ENCODE measurements at regions of chr6 and their contacts with region 1.

Region 1: DNA sequence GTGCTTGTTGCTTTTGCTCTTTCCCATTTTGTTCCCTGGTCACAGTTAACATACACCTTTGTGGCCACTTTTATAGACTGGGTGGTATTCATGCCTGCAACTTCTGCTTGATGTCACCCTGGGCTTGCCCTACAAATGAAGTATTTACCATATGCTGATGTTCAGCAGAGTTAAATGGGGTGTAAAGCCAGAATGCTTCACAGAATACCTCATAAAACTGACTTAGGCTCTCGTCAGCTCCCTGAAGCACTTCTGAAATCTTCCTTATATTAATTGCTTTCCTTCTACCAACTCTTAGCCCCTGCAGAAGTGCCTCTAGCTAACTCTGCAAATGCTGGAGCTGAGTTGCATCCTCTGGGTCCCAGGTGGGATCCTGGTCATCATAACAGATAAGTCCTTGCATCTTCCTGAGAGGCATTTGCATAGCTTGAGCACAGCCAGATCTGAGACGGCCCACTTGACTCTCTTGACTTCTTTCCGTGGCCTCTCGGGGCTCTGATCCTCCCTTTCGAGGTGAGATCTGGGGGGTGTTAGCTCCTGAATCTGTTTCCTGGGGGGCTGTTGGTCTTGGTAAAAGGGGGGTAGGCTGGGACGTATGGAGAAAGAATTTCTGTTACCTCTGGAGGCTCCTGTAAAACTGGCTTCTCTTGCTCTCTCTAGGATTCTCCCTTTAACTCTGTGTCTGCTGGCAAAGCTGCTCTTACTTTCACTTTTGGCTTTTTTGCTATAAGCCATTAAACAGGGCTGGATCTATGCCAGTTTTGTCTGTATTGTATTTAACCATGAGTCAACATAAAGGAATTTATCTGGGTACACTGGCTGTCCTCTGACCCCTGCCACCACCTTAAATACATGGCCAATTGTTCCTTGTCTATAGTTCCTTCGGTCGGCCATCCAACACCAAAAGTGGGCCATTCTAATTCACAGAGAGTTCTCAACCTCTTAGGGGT is 223.0 kb upstream of the SYNCRIP start:
- DNase-seq: peak; percentile 89
- ATAC-seq: peak; percentile 61
- H3K4me3 ChIP-seq: peak overlapping the region; percentile 67
- H3K27ac ChIP-seq: peak overlapping the region; percentile 33
- H3K4me1 ChIP-seq: peaks cover 20% of the 10 kb centered on the region
- H3K27me3 ChIP-seq: no peaks in the 10 kb centered on the region
- CTCF ChIP-seq: no peak

Region 2: GRCh38 chr6:85580882-85581267 is 284.8 kb before region 1 on chr6:
- CTCF ChIA-PET with region 1: no interaction called
- POLR2A ChIA-PET with region 1: no interaction called
- intact Hi-C with region 1: no loop called
- DNase-seq: peak; percentile 66
- ATAC-seq: peak; percentile 76
- H3K4me3 ChIP-seq: peak overlapping the region; percentile 28; the same call in 1 of the 2 replicates
- H3K27ac ChIP-seq: peak overlapping the region; percentile 94
- H3K4me1 ChIP-seq: peaks cover 31% of the 10 kb centered on the region
- H3K27me3 ChIP-seq: no peaks in the 10 kb centered on the region
- CTCF ChIP-seq: no peak

Region 3: GRCh38 chr6:85775887-85776286 is 89.8 kb before region 1 on chr6:
- CTCF ChIA-PET with region 1: no interaction called
- POLR2A ChIA-PET with region 1: no interaction called
- intact Hi-C with region 1: loop called (anchors 5 kb)
- DNase-seq: peak; percentile 49
- ATAC-seq: peak; percentile 69
- H3K4me3 ChIP-seq: no peak overlapping the region
- H3K27ac ChIP-seq: no peak overlapping the region
- H3K4me1 ChIP-seq: no peaks in the 10 kb centered on the region
- H3K27me3 ChIP-seq: no peaks in the 10 kb centered on the region
- CTCF ChIP-seq: peak; percentile 51

Region 4: DNA sequence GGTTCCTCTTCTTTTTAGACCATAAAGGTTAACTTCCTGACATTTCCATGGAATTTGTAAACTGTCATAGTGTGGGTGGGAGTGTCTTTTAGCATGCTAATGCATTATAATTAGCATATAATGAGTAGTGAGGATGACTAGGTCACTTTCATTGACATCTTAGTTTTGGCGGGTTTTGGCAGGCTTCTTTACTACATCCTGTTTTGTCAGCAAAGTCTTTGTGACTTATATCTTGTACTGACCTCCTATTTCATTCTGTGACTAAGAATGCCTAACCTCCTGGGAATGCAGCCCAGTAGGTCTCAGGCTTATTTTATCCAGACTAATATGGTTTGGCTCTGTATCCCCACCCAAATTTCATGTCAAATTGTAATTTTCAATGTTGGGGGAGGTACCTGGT is 73.4 kb before region 1 on chr6:
- CTCF ChIA-PET with region 1: no interaction called
- POLR2A ChIA-PET with region 1: no interaction called
- intact Hi-C with region 1: loop called (anchors 2 kb)
- DNase-seq: peak; percentile 84
- ATAC-seq: peak; percentile 89
- H3K4me3 ChIP-seq: no peak overlapping the region
- H3K27ac ChIP-seq: peak overlapping the region; percentile 64
- H3K4me1 ChIP-seq: peaks cover 11% of the 10 kb centered on the region
- H3K27me3 ChIP-seq: no peaks in the 10 kb centered on the region
- CTCF ChIP-seq: no peak

Region 5: GRCh38 chr6:85803721-85804120 is 62.0 kb before region 1 on chr6:
- CTCF ChIA-PET with region 1: no interaction called
- POLR2A ChIA-PET with region 1: no interaction called
- intact Hi-C with region 1: loop called (anchors 2 kb)
- DNase-seq: no peak
- ATAC-seq: no peak
- H3K4me3 ChIP-seq: no peak overlapping the region
- H3K27ac ChIP-seq: no peak overlapping the region
- H3K4me1 ChIP-seq: peaks cover 33% of the 10 kb centered on the region
- H3K27me3 ChIP-seq: no peaks in the 10 kb centered on the region
- CTCF ChIP-seq: no peak

Measured in PC-3 (cell line).